Naive thymus-derived CD8-positive, alpha-beta T cell (primary cell): ENCODE measurements at regions of chr11 and their contacts with region 1.

Region 1: GRCh38 chr11:78574386-78575381 is at the start of gene NARS2:
- DNase-seq: peak; percentile 95 to 99 (median 97)
- ATAC-seq: peak; percentile 86 to 89
- H3K4me3 Mint-ChIP-seq: peak within 1 kb of the TSS; percentile 94 to 99 (median 98)
- H3K27ac Mint-ChIP-seq: peak within 1 kb of the TSS; percentile 95 to 100 (median 99)
- H3K4me1 Mint-ChIP-seq: peaks cover 27 to 49% (median 43%) of the 10 kb centered on the region in 4 donors
- H3K27me3 Mint-ChIP-seq: peaks cover 0 to 2% (median 0%) of the 10 kb centered on the region in 5 donors
- polyA plus RNA-seq, gene NARS2: 9.8 to 17.0 (median 15.4) TPM

Region 2: GRCh38 chr11:78416305-78417178 is 158.1 kb before region 1 on chr11:
- POLR2A ChIA-PET with region 1: interaction called, 15 read pairs
- DNase-seq: peak; percentile 52 to 83 (median 62)
- ATAC-seq: peak; percentile 56 to 67
- H3K4me3 Mint-ChIP-seq: peak overlapping the region; percentile 82 to 99 (median 92)
- H3K27ac Mint-ChIP-seq: peak overlapping the region; percentile 47 to 90 (median 85)
- H3K4me1 Mint-ChIP-seq: peaks cover 16 to 54% (median 18%) of the 10 kb centered on the region in 4 donors
- H3K27me3 Mint-ChIP-seq: peaks cover 13 to 31% (median 16%) of the 10 kb centered on the region in 5 donors

Region 3: DNA sequence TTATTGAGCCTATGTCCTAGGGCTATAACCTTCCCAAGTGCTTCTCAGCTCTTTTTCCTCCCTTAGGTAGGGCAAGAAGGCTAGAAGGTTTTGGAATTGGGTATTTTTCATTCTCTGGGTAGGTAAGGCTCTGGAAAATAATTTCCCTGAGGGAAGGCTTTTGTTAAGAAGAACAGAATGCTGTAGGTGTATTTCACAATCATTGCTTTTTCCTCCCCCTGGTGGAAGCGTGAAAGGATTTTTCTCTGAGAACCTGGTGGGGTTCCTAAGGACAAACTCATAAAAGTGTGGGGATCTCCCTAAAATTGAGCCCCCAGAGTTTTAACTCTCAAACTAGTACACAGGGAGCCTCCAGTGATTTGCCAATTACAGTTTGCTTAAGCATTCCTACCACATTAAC is 41.0 kb after region 1 on chr11:
- POLR2A ChIA-PET with region 1: no interaction called
- DNase-seq: no peak
- ATAC-seq: no peak
- H3K4me3 Mint-ChIP-seq: no peak overlapping the region
- H3K27ac Mint-ChIP-seq: no peak overlapping the region
- H3K4me1 Mint-ChIP-seq: no peaks in the 10 kb centered on the region
- H3K27me3 Mint-ChIP-seq: peaks cover 0 to 13% (median 10%) of the 10 kb centered on the region in 5 donors